ENCODE measurements at regions of chr1 and their contacts with region 1.

Region 1: DNA sequence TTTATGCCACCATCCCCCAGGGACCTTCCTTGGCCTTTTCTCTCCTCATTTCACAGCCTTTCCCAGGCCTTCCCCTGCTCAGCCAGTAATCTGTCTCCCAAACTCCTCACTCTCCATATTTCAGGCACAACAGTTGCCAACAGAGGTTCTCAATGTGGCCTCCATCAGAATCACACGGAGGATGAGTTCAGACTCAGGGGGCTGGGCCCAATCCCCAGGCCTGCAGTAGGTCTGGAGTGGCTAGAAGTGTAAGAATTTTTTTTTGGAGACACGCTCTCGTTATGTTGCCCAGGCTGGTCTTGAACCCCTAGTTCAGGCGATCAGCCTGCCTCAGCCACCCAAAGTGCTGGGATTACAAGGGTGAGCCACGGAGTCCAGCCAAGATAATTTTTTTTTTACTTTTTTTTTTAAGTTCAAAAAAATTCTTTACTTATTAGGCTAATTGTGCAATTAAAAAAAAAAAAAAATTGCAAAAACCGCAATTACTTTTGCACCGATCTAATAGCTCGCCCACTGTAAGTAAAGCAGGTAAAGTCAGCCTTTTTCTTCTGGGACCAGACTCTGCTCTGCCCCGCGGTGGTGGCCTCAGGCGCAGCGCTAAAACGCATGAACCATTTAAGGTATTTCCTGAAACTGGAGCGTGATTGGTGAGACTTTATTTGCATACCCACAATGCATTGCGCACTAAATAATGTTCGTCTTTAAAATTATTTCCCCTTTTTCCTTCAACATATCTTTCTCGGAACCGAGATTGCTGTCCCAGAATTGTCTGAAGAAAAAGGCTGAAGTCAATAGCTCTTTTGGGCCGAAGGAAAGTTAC is 18.7 kb downstream of the KIAA2013 start:
- DNase-seq: no peak
- H3K4me3 ChIP-seq: no peak overlapping the region; the same call in 1 of the 2 replicates
- CTCF ChIP-seq: peak; percentile 74

Region 2: DNA sequence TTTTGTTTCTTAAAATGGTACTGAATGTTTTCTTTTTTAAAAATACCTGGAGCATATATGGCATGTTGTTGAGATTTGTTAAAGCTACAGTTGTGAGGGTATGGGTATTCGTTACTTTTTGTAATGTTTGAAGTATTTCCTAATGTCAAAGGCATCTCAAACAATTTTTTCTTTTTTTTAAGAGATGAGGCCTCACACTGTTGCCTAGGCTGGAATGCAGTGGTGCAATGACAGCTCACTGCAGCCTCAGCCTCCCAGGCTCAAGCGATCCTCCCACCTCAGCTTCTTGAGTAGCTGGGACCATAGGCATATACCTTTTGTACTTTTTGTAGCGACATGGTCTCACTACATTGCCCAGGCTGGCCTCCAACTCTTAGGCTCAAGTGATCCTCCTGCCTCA is 85.4 kb before region 1 on chr1:
- CTCF ChIA-PET with region 1: no interaction called
- POLR2A ChIA-PET with region 1: interaction called, 10 read pairs
- DNase-seq: no peak
- H3K4me3 ChIP-seq: no peak overlapping the region
- CTCF ChIP-seq: no peak

Region 3: DNA sequence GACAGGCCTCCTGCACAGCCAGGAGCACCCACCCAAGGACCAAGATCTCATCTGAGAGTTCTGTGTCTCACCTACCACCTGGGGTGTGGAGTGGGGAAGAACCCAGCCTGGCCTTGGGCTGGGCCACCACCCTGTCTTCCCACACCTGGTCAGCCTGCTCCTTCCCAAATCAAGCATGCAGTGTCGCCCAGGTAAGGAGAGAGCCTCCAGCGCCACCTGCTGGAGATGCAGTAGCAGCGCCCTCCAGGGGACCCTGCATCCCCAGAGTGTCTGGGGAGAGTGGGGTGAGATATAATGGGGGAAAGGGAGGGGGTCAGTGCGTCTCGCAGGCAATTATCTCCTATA is 13.6 kb before region 1 on chr1:
- CTCF ChIA-PET with region 1: interaction called, 13 read pairs
- POLR2A ChIA-PET with region 1: interaction called, 6 read pairs
- DNase-seq: no peak
- H3K4me3 ChIP-seq: no peak overlapping the region
- CTCF ChIP-seq: peak; percentile 92

Region 4: GRCh38 chr1:11925938-11926292 is 18.4 kb after region 1 on chr1:
- CTCF ChIA-PET with region 1: interaction called, 4 read pairs
- POLR2A ChIA-PET with region 1: interaction called, 78 read pairs
- DNase-seq: no peak
- H3K4me3 ChIP-seq: peak overlapping the region; percentile 58
- CTCF ChIP-seq: no peak

Region 5: GRCh38 chr1:11940260-11940921 is 32.9 kb after region 1 on chr1:
- CTCF ChIA-PET with region 1: no interaction called
- POLR2A ChIA-PET with region 1: interaction called, 27 read pairs
- DNase-seq: no peak
- H3K4me3 ChIP-seq: no peak overlapping the region
- CTCF ChIP-seq: no peak

Region 6: DNA sequence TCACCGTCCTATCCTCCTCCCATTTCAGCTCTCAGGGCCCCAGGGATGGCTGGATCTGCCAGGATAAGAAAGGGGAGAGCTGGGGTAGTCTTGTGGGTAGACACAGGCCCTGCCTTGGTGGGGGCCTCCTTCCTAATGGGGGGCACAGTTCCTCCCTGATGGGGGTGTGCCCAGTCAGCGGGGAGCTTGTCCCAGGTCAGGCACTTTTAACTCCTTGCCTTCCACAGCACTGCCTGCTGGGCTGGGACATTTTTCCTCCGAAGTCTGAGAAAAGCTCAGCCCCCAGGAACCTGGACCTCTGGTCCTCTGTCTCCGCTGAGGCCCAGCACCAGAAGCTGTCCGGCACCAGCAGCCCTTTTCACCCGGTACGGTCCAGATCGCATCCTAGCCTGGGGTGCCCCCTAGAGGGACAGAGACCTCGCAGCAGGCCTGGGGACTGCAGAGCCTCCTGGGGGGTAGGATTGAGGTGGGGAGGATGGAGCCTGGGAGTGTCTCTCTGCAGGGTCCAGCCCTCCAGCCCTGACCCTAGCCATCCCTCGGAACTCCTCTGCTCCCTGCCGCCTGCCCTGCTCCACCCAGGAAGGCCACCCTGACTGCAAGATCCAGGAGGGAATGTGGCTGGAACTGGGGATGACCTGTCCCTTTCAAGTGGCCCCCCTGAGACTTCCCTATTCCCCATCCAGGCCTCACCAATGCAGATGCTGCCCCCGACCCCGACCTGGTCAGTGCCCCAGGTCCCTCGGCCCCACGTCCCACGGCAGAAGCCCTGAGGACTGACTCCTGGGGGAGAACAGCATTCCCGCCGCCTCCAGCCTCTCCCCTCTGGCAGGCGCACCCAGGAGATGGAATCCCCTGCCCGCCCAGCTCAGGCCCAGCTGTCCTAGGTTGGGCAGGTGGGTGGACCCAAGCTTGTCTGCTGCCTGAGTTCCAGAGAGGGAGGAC is 123.8 kb after region 1 on chr1:
- CTCF ChIA-PET with region 1: no interaction called
- POLR2A ChIA-PET with region 1: interaction called, 11 read pairs
- DNase-seq: no peak
- H3K4me3 ChIP-seq: no peak overlapping the region
- CTCF ChIP-seq: peak; percentile 68